Pancreas (tissue), 10 donors: ENCODE measurements at regions of chr15 and their contacts with region 1.

Region 1: GRCh38 chr15:66946578-66947164 is 118.7 kb upstream of the SMAD3 start:
- DNase-seq: peak; percentile 39 to 83 (median 64)
- ATAC-seq: peak; percentile 78 to 96 (median 90)
- H3K4me3 ChIP-seq: no peak overlapping the region
- H3K27ac ChIP-seq: no peak overlapping the region
- H3K4me1 ChIP-seq: no peaks in the 10 kb centered on the region
- H3K27me3 ChIP-seq: no peaks in the 10 kb centered on the region
- CTCF ChIP-seq: peak; percentile 84 to 93 (median 90)

Region 2: GRCh38 chr15:66997212-66997611 is 50.5 kb after region 1 on chr15:
- intact Hi-C with region 1: no loop called
- DNase-seq: no peak
- ATAC-seq: no peak
- H3K4me3 ChIP-seq: no peak overlapping the region
- H3K27ac ChIP-seq: no peak overlapping the region
- H3K4me1 ChIP-seq: no peaks in the 10 kb centered on the region
- H3K27me3 ChIP-seq: no peaks in the 10 kb centered on the region
- CTCF ChIP-seq: no peak

Region 3: GRCh38 chr15:67065444-67066093 is 118.9 kb after region 1 on chr15 and contains the start of gene SMAD3:
- intact Hi-C with region 1: loop called in 2 of 3 experiments (anchors 5 to 10 kb)
- DNase-seq: peak; percentile 93 to 96 (median 94)
- ATAC-seq: peak; percentile 71 to 83 (median 78)
- H3K4me3 ChIP-seq: peak within 1 kb of the TSS; percentile 60 to 86 (median 74)
- H3K27ac ChIP-seq: peak within 1 kb of the TSS; percentile 92 to 95 (median 95)
- H3K4me1 ChIP-seq: peaks cover 23 to 53% (median 42%) of the 10 kb centered on the region in 3 donors
- H3K27me3 ChIP-seq: no peaks in the 10 kb centered on the region
- CTCF ChIP-seq: no peak
- total RNA-seq, gene SMAD3: 15.6 to 42.5 (median 23.8) TPM

Region 4: DNA sequence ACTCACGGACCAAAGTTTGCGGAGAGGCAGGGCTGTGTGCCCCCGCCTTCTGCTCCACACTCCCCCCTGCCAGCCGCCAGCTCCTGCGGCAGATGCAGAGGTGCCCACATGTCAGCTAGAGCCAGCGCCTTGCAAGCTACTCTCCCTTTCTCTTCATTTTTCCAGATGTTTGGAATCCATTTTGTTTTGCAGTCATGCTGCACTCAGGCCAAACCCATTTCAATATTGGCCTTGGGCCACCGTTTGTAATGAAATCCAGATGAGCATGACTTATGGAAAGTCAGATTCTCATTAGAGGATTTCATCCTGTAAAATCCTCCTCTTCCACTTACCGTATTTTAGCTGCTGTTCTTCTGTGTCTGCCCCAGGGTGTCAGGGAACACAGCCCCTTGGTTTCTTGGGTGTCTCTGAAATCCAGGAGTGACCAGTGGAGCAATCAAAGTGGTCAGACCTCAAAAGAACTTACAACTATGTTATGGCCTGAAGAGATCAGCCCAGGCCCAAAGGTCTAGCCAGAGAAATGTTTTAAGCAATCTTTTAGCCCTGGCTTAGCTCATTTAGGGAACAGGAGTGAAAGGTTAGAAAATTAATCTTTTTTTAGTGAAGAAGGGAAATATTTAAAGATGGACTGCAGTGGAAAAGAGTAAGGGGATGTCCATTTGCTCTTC is 242.0 kb after region 1 on chr15:
- intact Hi-C with region 1: no loop called
- DNase-seq: no peak
- ATAC-seq: peak in 3 of 4 donors; percentile 7 to 24 (median 11)
- H3K4me3 ChIP-seq: no peak overlapping the region
- H3K27ac ChIP-seq: no peak overlapping the region
- H3K4me1 ChIP-seq: peaks cover 3 to 8% (median 5%) of the 10 kb centered on the region in 3 donors
- H3K27me3 ChIP-seq: no peaks in the 10 kb centered on the region
- CTCF ChIP-seq: no peak

Region 5: GRCh38 chr15:67303490-67304363 is 357.1 kb after region 1 on chr15:
- intact Hi-C with region 1: loop called (anchors 5 to 10 kb)
- DNase-seq: peak in 2 of 6 donors; percentile 3 to 17
- ATAC-seq: peak in 3 of 4 donors; percentile 54 to 83 (median 82)
- H3K4me3 ChIP-seq: no peak overlapping the region
- H3K27ac ChIP-seq: no peak overlapping the region
- H3K4me1 ChIP-seq: no peaks in the 10 kb centered on the region
- H3K27me3 ChIP-seq: no peaks in the 10 kb centered on the region
- CTCF ChIP-seq: peak in 3 of 4 donors; percentile 10 to 45 (median 34)

Region 6: GRCh38 chr15:67433495-67434099 is 486.9 kb after region 1 on chr15:
- intact Hi-C with region 1: loop called in 1 of 3 experiments (anchors 5 kb)
- DNase-seq: peak in 5 of 6 donors; percentile 17 to 69 (median 44)
- ATAC-seq: peak; percentile 84 to 96 (median 90)
- H3K4me3 ChIP-seq: no peak overlapping the region
- H3K27ac ChIP-seq: no peak overlapping the region
- H3K4me1 ChIP-seq: no peaks in the 10 kb centered on the region
- H3K27me3 ChIP-seq: no peaks in the 10 kb centered on the region
- CTCF ChIP-seq: peak; percentile 39 to 80 (median 54)

Region 7: DNA sequence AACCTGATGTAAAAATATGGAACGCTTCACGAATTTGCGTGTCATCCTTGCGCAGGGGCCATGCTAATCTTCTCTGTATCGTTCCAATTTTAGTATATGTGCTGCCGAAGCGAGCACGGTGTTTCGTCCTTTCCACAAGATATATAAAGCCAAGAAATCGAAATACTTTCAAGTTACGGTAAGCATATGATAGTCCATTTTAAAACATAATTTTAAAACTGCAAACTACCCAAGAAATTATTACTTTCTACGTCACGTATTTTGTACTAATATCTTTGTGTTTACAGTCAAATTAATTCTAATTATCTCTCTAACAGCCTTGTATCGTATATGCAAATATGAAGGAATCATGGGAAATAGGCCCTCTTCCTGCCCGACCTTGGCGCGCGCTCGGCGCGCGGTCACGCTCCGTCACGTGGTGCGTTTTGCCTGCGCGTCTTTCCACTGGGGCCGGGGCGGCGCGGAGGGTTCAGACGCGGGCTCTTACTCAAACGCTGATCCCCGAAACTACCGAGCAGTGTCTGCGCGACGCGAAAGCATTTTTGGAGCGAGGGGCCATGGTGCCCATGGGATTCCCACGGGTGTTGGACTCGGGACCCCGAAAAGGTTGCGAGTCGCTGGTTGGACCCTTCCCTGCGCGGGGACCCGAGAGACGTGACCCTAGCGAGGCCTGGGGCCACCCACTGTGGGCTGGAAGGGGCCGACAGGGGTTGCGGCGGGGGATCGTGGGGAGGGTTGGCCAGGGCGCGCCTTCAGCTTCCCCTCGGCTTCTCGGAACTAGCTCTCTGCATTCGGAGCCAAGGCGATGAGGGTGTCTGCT is 893.5 kb after region 1 on chr15 and contains the start of gene RNU6-1:
- intact Hi-C with region 1: loop called in 1 of 3 experiments (anchors 5 kb)
- DNase-seq: peak; percentile 90 to 96 (median 93)
- ATAC-seq: peak; percentile 88 to 95 (median 93)
- H3K4me3 ChIP-seq: peak within 1 kb of the TSS; percentile 82 to 95 (median 93)
- H3K27ac ChIP-seq: peak within 1 kb of the TSS; percentile 91 to 99 (median 96)
- H3K4me1 ChIP-seq: peaks cover 0 to 14% (median 4%) of the 10 kb centered on the region in 3 donors
- H3K27me3 ChIP-seq: no peaks in the 10 kb centered on the region
- CTCF ChIP-seq: no peak
- total RNA-seq, gene RNU6-1: not detected